ENCODE measurements at regions of chr17 and their contacts with region 1.

Region 1: GRCh38 chr17:40075201-40075941 is 12.6 kb downstream of the THRA start:
- DNase-seq: peak; percentile 67
- H3K4me3 Mint-ChIP-seq: no peak overlapping the region
- H3K27ac Mint-ChIP-seq: peak overlapping the region; percentile 19
- H3K4me1 Mint-ChIP-seq: peaks cover 12% of the 10 kb centered on the region
- H3K27me3 Mint-ChIP-seq: no peaks in the 10 kb centered on the region

Region 2: GRCh38 chr17:40018211-40019121 is 56.9 kb before region 1 on chr17:
- CTCF ChIA-PET with region 1: interaction called, 10 read pairs
- POLR2A ChIA-PET with region 1: no interaction called
- DNase-seq: no peak
- H3K4me3 Mint-ChIP-seq: no peak overlapping the region
- H3K27ac Mint-ChIP-seq: no peak overlapping the region
- H3K4me1 Mint-ChIP-seq: peaks cover 4% of the 10 kb centered on the region
- H3K27me3 Mint-ChIP-seq: no peaks in the 10 kb centered on the region

Region 3: DNA sequence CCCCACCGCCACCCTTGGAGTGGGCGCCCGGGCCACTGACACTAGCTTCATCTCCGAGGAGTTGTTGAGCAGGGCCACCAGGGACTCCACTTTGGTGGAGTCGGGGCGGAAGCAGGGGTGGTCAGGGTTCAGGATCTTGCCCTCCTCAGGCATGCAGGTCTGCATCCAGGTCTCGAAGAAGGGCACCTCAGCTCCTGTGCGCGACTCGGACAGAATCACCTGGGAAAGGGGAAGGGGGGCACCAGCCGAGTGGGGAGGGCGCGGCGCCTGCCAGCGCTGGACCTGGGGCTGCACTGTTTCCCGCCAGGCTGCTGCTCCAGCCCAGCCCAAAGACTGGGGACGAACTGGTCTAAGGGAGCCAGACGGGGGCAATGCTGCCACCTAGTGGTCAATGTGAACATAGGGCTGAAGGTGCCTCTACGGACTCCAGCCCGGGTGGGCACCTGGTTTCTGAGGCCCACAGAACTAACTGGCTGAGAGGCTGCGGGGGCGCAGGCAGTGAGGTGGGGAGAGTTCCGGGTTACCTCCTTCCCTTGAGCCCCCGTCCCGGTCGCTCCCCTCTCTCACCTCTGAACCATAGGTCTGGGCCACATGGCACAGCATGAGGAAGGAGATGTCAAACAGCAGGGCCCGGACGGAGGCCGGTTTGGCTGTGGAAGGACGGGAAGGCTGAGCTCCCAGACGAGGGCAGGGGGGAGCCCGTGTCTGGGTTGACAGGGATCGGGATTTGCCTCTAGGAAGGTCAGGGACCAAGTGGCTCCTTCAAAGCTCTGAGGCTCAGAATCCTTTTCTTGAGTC is 48.4 kb before region 1 on chr17:
- CTCF ChIA-PET with region 1: interaction called, 16 read pairs
- POLR2A ChIA-PET with region 1: no interaction called
- DNase-seq: peak; percentile 81
- H3K4me3 Mint-ChIP-seq: no peak overlapping the region
- H3K27ac Mint-ChIP-seq: no peak overlapping the region
- H3K4me1 Mint-ChIP-seq: peaks cover 25% of the 10 kb centered on the region
- H3K27me3 Mint-ChIP-seq: no peaks in the 10 kb centered on the region

Region 4: DNA sequence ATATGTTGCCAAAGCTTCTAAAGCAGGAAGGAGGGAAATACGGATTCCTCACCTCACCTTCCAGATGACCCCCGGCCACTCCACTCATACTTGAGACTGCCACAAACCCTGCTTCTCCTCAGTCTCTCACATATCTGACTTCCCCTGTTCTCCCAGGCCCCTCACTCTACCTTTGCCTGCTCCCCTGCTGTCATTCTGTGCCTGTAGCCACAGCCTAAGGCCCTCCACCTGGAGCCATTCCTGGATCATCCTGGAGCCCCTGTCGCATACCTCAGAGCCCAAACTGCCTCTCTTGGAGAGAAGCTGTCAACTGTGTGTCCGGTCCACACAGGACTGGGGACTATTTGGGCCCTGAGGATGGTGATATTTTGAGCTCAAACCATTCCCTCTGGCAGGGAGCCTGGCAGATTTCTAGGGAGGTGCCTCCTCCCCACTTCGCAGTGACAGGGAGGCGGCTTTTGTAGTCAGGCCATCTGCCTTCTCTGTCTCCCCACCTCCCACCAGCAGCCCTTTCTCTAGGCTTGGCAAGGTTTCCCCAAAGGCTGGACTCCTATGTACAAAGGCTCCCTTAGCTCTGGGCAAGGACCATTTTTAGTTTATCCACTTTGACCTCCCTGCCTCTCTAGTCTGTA is 18.9 kb before region 1 on chr17:
- CTCF ChIA-PET with region 1: interaction called, 32 read pairs
- POLR2A ChIA-PET with region 1: interaction called, 14 read pairs
- DNase-seq: no peak
- H3K4me3 Mint-ChIP-seq: no peak overlapping the region
- H3K27ac Mint-ChIP-seq: no peak overlapping the region
- H3K4me1 Mint-ChIP-seq: peaks cover 26% of the 10 kb centered on the region
- H3K27me3 Mint-ChIP-seq: peaks cover 20% of the 10 kb centered on the region

Region 5: DNA sequence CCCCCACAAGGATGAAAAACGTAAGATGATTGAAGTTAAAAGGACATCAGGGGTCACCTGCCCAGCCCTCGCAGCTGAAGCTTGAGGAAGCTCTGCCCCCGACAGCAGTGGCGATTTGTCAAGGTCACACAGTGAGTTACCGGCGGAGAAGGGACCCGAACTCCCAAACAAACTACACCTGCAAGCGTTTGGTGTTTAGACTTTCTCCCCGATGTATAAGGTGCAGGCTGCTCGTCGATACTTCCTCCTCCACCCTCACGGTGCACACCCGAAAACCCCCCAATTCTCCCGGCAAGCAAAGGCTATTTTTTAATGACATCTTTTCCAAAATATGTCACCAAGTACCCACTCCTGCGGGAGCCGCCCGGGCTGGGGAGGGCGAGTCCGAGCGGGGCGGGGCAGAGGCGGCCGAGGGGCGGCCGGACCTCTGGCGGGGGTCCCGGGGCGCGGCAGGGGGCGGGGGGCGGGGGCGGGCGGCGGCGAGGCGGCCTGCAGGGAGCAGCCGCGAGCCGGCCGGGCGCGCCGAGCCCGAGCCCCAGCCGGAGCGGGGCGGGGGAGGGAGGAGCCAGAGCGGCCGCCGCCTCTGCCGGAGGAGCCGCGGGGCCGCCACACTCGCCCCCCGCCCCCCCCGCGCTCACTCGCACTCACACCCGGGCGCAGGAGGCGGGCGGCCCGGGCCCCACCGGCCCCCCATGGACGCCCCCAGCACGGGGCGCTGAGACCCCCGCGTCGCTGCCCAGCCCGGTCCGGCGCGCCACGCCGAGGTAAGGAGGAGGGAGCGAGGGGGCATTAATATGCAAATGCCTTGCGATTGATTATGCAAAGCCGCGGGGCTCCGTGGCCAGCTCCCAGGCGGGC is 12.8 kb before region 1 on chr17 and contains the start of gene THRA:
- CTCF ChIA-PET with region 1: interaction called, 60 read pairs
- POLR2A ChIA-PET with region 1: interaction called, 3 read pairs
- DNase-seq: peak; percentile 69
- H3K4me3 Mint-ChIP-seq: peak within 1 kb of the TSS; percentile 78
- H3K27ac Mint-ChIP-seq: peak within 1 kb of the TSS; percentile 35
- H3K4me1 Mint-ChIP-seq: peaks cover 35% of the 10 kb centered on the region
- H3K27me3 Mint-ChIP-seq: peaks cover 48% of the 10 kb centered on the region
- total RNA-seq, gene THRA: 8.4 TPM

Region 6: GRCh38 chr17:40086150-40087044 is 11.0 kb after region 1 on chr17:
- CTCF ChIA-PET with region 1: interaction called, 31 read pairs
- POLR2A ChIA-PET with region 1: interaction called, 3 read pairs
- DNase-seq: peak; percentile 54
- H3K4me3 Mint-ChIP-seq: no peak overlapping the region
- H3K27ac Mint-ChIP-seq: no peak overlapping the region
- H3K4me1 Mint-ChIP-seq: no peaks in the 10 kb centered on the region
- H3K27me3 Mint-ChIP-seq: no peaks in the 10 kb centered on the region

Region 7: GRCh38 chr17:40098846-40099618 is 23.7 kb after region 1 on chr17:
- CTCF ChIA-PET with region 1: interaction called, 29 read pairs
- POLR2A ChIA-PET with region 1: interaction called, 35 read pairs
- DNase-seq: peak; percentile 98
- H3K4me3 Mint-ChIP-seq: peak overlapping the region; percentile 77
- H3K27ac Mint-ChIP-seq: peak overlapping the region; percentile 92
- H3K4me1 Mint-ChIP-seq: peaks cover 88% of the 10 kb centered on the region
- H3K27me3 Mint-ChIP-seq: no peaks in the 10 kb centered on the region